B cell (primary cell): ENCODE measurements at regions of chr12 and their contacts with region 1.

Region 1: DNA sequence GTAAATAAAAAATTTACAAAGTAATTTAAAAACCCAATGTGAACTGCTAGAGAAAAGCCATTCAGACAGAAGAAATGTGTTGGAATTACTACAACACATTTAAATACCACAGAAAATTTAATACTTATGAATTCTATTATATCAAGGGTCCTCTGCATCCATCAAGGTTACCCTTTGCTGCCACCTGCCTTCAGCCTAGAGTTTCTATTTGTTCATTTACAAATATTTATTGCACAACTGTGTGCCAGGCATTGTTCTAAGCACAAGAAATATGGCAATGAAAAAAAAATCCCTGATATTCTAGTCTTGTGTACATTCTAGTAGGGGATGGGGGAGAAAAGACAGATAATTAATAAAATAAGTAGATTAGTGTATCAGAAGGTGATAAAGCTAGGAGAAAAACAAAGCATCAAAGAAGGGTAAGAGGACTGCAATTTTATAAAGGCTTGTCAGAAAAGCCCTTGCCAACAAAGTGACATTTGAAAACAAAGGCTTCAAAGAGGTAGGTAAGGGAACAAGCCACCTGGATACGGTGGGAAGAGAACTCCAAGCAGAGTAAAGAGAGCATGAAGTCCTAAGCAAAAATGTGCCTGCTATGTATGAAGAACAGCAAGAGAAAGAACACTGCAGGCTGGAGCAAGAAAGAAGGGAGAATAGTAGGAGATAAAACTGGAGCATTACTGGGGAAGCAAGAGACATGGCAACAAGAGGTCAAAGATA is 59.1 kb upstream of the SLC6A13 start:
- DNase-seq: no peak
- ATAC-seq: no peak
- H3K4me3 ChIP-seq: no peak overlapping the region
- H3K4me3 Mint-ChIP-seq: no peak overlapping the region
- H3K27ac ChIP-seq: no peak overlapping the region
- H3K27ac Mint-ChIP-seq: no peak overlapping the region
- H3K4me1 ChIP-seq: no peaks in the 10 kb centered on the region
- H3K4me1 Mint-ChIP-seq: no peaks in the 10 kb centered on the region
- H3K27me3 ChIP-seq: no peaks in the 10 kb centered on the region
- H3K27me3 Mint-ChIP-seq: no peaks in the 10 kb centered on the region
- CTCF ChIP-seq: no peak

Region 2: GRCh38 chr12:337039-337438 is 15.3 kb after region 1 on chr12:
- CTCF ChIA-PET with region 1: no interaction called
- POLR2A ChIA-PET with region 1: interaction called, 11 read pairs
- intact Hi-C with region 1: no loop called
- DNase-seq: no peak
- ATAC-seq: no peak
- H3K4me3 ChIP-seq: no peak overlapping the region
- H3K4me3 Mint-ChIP-seq: no peak overlapping the region
- H3K27ac ChIP-seq: no peak overlapping the region
- H3K27ac Mint-ChIP-seq: no peak overlapping the region
- H3K4me1 ChIP-seq: no peaks in the 10 kb centered on the region
- H3K4me1 Mint-ChIP-seq: peaks cover 2% of the 10 kb centered on the region
- H3K27me3 ChIP-seq: no peaks in the 10 kb centered on the region
- H3K27me3 Mint-ChIP-seq: no peaks in the 10 kb centered on the region
- CTCF ChIP-seq: no peak

Region 3: GRCh38 chr12:366820-367219 is 45.1 kb after region 1 on chr12:
- CTCF ChIA-PET with region 1: no interaction called
- POLR2A ChIA-PET with region 1: no interaction called
- intact Hi-C with region 1: loop called (anchors 10 kb)
- DNase-seq: no peak
- ATAC-seq: no peak
- H3K4me3 ChIP-seq: no peak overlapping the region
- H3K4me3 Mint-ChIP-seq: no peak overlapping the region
- H3K27ac ChIP-seq: no peak overlapping the region
- H3K27ac Mint-ChIP-seq: no peak overlapping the region
- H3K4me1 ChIP-seq: no peaks in the 10 kb centered on the region
- H3K4me1 Mint-ChIP-seq: no peaks in the 10 kb centered on the region
- H3K27me3 ChIP-seq: no peaks in the 10 kb centered on the region
- H3K27me3 Mint-ChIP-seq: no peaks in the 10 kb centered on the region
- CTCF ChIP-seq: no peak